BJ (cell line): ENCODE measurements at regions of chr4 and their contacts with region 1.

Region 1: DNA sequence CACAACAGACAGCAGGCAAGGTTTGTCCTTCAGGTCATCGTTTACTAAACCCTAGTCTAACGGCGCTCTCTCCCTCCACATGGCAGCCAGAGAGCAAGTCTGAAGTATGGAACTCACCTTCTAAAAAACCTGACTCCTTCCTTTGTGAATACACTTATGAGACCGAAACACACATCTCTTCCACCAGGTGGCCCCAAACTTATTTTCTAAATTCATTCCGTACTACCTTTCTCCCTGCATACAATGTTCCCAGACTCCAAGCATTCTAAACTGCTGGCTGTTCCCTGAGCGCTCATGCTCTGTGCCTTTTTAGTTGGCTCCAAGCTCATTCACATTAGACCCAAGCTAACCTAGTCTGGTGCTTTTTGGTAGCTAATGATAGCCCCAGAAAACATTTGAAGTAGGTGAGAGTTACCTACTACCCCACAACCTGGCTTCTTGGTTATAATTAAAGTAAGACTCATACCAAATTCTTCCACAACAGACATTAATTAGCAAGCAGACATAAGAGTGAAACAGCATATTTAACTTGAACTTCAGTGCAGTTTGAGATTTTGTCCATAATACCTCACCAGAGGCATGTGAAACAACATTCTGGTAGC is 67.6 kb upstream of the DCLK2 start:
- DNase-seq: no peak
- H3K4me3 ChIP-seq: no peak overlapping the region
- H3K27me3 ChIP-seq: no peaks in the 10 kb centered on the region
- CTCF ChIP-seq: peak; percentile 58

Region 2: GRCh38 chr4:150078637-150079581 is 68.3 kb after region 1 on chr4:
- CTCF ChIA-PET with region 1: interaction called, 24 read pairs
- POLR2A ChIA-PET with region 1: interaction called, 9 read pairs
- DNase-seq: no peak
- H3K4me3 ChIP-seq: peak overlapping the region; percentile 97
- H3K27me3 ChIP-seq: no peaks in the 10 kb centered on the region
- CTCF ChIP-seq: no peak; the same call in 1 of the 2 replicates

Region 3: DNA sequence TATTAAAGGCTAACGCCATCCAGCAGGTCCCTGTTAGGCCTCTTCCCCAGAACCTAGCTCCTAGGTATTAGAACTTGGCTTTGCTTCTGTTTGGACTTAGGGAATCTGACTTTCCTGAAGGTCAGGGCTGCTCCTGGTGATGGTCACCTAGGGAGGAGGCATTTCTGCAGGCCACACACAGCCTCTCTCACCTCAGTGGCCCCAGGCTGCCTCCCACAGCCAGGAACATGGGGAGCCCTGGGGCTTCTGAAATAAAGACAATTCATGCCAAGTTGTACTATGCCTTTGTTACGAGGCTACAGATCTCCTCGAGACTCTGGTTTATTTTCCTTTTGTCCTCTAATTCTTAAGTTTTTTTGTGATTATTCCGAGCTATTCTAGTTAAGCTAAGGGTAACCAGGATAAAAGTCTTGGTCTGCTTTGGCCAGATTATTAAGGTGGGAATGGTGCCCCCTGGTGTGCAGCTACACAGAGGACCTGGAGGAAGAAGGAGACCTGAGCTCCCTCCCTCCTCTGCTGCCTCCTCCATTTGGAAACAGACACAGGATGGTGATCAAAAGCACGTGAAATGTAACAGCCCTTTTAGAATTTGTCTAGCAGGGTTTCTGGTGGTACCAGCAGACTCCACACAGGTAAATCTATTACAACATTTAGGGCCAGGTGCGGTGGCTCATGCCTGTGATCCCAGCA is 198.7 kb after region 1 on chr4:
- CTCF ChIA-PET with region 1: interaction called, 16 read pairs
- POLR2A ChIA-PET with region 1: no interaction called
- DNase-seq: no peak
- H3K4me3 ChIP-seq: no peak overlapping the region
- H3K27me3 ChIP-seq: no peaks in the 10 kb centered on the region
- CTCF ChIP-seq: peak; percentile 55